Sigmoid colon (tissue), 7 donors: ENCODE measurements at regions of chr3 and their contacts with region 1.

Region 1: DNA sequence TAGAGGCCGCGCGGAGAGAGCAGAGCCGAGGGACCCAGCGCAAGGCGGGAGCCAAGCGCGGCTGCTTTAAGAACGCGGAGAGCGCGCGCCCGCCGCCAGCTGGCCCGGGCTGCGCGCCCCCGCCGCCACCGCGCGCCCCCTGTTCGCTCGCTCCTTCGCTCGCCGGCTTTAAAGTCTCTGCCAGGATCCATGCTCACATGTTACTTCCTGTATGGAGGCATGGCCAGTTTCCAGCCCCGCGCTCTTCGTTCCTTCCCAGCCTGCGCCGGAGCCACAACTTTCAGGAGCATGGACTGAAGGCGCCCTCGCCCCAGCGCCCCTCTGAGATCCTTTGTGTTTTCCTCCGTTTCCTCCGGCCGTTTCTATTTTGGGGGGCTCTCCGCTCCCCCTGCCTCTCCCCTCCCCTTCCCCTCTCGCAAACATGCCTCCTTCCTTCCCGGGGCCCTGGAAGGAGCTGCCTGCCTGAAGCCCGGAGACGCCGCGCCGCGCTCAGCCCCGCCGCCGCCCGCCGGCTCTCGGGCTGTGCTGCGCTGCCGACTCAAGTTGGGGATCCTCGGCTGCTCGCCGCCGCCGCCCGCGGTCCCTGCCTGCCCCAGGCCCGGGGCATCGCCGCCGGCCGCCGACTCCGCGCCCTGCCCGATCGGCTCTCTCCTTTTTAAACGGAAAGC is at the start of gene PTPRG:
- DNase-seq: peak; percentile 97
- H3K4me3 ChIP-seq: peak within 1 kb of the TSS; percentile 85 to 93 (median 90)
- H3K27ac ChIP-seq: peak within 1 kb of the TSS; percentile 94 to 98 (median 94)
- H3K4me1 ChIP-seq: peaks cover 0 to 22% (median 14%) of the 10 kb centered on the region in 4 donors
- H3K27me3 ChIP-seq: no peaks in the 10 kb centered on the region
- CTCF ChIP-seq: no peak
- EP300 ChIP-seq: no peak
- POLR2A ChIP-seq: peak; percentile 40 to 48
- total RNA-seq, gene PTPRG: 62.7 to 76.3 (median 73.7) TPM

Region 2: GRCh38 chr3:61251174-61251972 is 310.1 kb before region 1 on chr3 and contains the start of gene FHIT:
- intact Hi-C with region 1: loop called (anchors 10 kb)
- DNase-seq: peak; percentile 97
- H3K4me3 ChIP-seq: peak within 1 kb of the TSS; percentile 64 to 83 (median 66)
- H3K27ac ChIP-seq: peak within 1 kb of the TSS; percentile 61 to 81 (median 74)
- H3K4me1 ChIP-seq: peaks cover 0 to 22% (median 9%) of the 10 kb centered on the region in 4 donors
- H3K27me3 ChIP-seq: no peaks in the 10 kb centered on the region
- CTCF ChIP-seq: no peak
- EP300 ChIP-seq: no peak
- POLR2A ChIP-seq: peak in 1 of 2 donors; percentile 40
- total RNA-seq, gene FHIT: 6.1 to 10.2 (median 9.6) TPM

Region 3: DNA sequence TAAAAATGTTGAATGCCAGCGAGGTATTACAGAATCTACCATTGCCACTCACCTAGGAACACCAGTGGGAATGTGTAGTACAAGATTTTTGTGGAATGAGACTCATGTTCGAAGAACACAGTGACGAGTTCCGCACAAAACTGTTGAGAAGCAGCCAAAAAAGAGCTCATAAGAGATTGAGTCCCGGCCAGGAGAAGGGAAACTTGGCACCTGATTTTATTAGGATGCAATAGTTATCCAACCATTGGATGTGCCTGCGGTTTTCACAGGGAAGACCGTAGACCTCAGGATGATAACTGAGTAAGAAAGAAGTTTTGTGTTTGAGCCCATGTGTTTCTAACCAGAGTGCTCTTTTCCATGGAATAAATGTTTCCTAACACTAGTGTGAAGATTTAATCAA is 88.8 kb after region 1 on chr3:
- intact Hi-C with region 1: loop called (anchors 1 kb)
- DNase-seq: peak; percentile 93
- H3K4me3 ChIP-seq: no peak overlapping the region
- H3K27ac ChIP-seq: peak overlapping the region; percentile 23 to 86 (median 75)
- H3K4me1 ChIP-seq: peaks cover 0 to 39% (median 31%) of the 10 kb centered on the region in 4 donors
- H3K27me3 ChIP-seq: no peaks in the 10 kb centered on the region
- CTCF ChIP-seq: no peak
- EP300 ChIP-seq: no peak
- POLR2A ChIP-seq: no peak

Region 4: GRCh38 chr3:61704807-61705206 is 143.3 kb after region 1 on chr3:
- intact Hi-C with region 1: no loop called
- DNase-seq: no peak
- H3K4me3 ChIP-seq: no peak overlapping the region
- H3K27ac ChIP-seq: no peak overlapping the region
- H3K4me1 ChIP-seq: peaks cover 0 to 14% (median 7%) of the 10 kb centered on the region in 4 donors
- H3K27me3 ChIP-seq: no peaks in the 10 kb centered on the region
- CTCF ChIP-seq: no peak
- EP300 ChIP-seq: no peak
- POLR2A ChIP-seq: no peak

Region 5: DNA sequence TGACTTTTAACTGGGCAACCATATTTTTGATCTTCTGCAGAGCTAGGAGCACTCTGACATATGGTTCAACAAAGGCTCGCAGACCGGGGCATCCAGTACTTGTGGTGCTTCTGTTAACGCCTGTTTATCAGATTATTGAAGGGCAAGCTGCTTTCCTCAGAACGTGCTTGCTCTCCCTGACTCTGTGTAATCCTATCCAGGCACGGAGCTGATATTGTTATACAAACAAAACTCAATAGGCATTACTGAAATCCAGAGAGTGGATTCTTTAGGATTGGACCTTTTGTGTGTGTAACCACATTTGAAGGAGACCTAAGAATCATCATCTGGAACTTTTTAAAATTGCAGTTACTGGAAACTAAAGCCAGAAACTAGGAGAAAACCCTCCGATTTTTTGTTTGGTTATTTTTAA is 246.4 kb after region 1 on chr3:
- intact Hi-C with region 1: loop called (anchors 5 kb)
- DNase-seq: no peak
- H3K4me3 ChIP-seq: no peak overlapping the region
- H3K27ac ChIP-seq: peak overlapping the region in 3 of 4 donors; percentile 67 to 80 (median 79)
- H3K4me1 ChIP-seq: peaks cover 0 to 100% (median 87%) of the 10 kb centered on the region in 4 donors
- H3K27me3 ChIP-seq: no peaks in the 10 kb centered on the region
- CTCF ChIP-seq: no peak
- EP300 ChIP-seq: peak in 1 of 4 donors; percentile 26
- POLR2A ChIP-seq: no peak

Region 6: GRCh38 chr3:61927332-61927731 is 365.8 kb after region 1 on chr3:
- intact Hi-C with region 1: loop called (anchors 2 kb)
- DNase-seq: peak; percentile 93
- H3K4me3 ChIP-seq: no peak overlapping the region
- H3K27ac ChIP-seq: peak overlapping the region; percentile 55 to 78 (median 70)
- H3K4me1 ChIP-seq: peaks cover 0 to 67% (median 57%) of the 10 kb centered on the region in 4 donors
- H3K27me3 ChIP-seq: no peaks in the 10 kb centered on the region
- CTCF ChIP-seq: no peak
- EP300 ChIP-seq: no peak
- POLR2A ChIP-seq: no peak